Activated T-helper 1 cell treated with anti-CD3 and anti-CD28 coated beads, Interleukin-12 subunit alpha, Interleukin-12 subunit beta, Interleukin-2, Interleukin-4 antibody, amounts not matched to agents 30 ng/mL and 10 ng/mL and 1 ng/mL, durations not matched to agents 14 hours and 24 hours and 36 hours (primary cell): ENCODE measurements at regions of chr2 and their contacts with region 1.

Region 1: GRCh38 chr2:36147670-36148390 is 207.7 kb upstream of the CRIM1 start:
- DNase-seq: no peak
- H3K4me3 Mint-ChIP-seq: peak overlapping the region; percentile 19
- H3K27ac Mint-ChIP-seq: peak overlapping the region; percentile 49
- H3K4me1 Mint-ChIP-seq: peaks cover 26% of the 10 kb centered on the region
- H3K27me3 Mint-ChIP-seq: peaks cover 17% of the 10 kb centered on the region

Region 2: GRCh38 chr2:35973132-35973736 is 174.6 kb before region 1 on chr2:
- intact Hi-C with region 1: loop called (anchors 2 kb)
- DNase-seq: no peak
- H3K4me3 Mint-ChIP-seq: no peak overlapping the region
- H3K27ac Mint-ChIP-seq: no peak overlapping the region
- H3K4me1 Mint-ChIP-seq: no peaks in the 10 kb centered on the region
- H3K27me3 Mint-ChIP-seq: peaks cover 16% of the 10 kb centered on the region

Region 3: GRCh38 chr2:36277146-36277808 is 129.4 kb after region 1 on chr2:
- intact Hi-C with region 1: loop called (anchors 1 kb)
- DNase-seq: no peak
- H3K4me3 Mint-ChIP-seq: no peak overlapping the region
- H3K27ac Mint-ChIP-seq: peak overlapping the region; percentile 56
- H3K4me1 Mint-ChIP-seq: peaks cover 10% of the 10 kb centered on the region
- H3K27me3 Mint-ChIP-seq: peaks cover 2% of the 10 kb centered on the region

Region 4: GRCh38 chr2:36337354-36337753 is 189.5 kb after region 1 on chr2:
- intact Hi-C with region 1: loop called (anchors 1 kb)
- DNase-seq: no peak
- H3K4me3 Mint-ChIP-seq: no peak overlapping the region
- H3K27ac Mint-ChIP-seq: no peak overlapping the region
- H3K4me1 Mint-ChIP-seq: peaks cover 10% of the 10 kb centered on the region
- H3K27me3 Mint-ChIP-seq: peaks cover 6% of the 10 kb centered on the region

Region 5: DNA sequence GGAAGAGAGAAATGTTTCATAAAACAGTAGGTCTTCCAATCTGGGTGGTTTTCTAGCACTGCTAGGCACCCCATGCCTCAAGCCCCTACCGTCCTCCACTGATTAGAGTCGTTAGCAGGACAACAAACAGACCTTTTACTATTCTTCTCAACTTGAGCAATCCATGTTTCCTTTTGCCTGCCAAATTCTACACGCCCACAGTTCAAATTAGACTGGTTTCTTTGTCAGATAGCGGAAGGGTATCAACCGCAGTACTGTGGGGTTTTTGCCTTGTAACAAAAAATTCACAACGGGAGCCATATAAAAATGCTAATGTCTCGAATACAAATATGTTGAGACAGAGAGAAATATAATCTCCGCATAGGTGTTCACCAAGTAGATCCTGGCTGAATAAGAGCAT is 608.6 kb after region 1 on chr2:
- intact Hi-C with region 1: no loop called
- DNase-seq: no peak
- H3K4me3 Mint-ChIP-seq: no peak overlapping the region
- H3K27ac Mint-ChIP-seq: no peak overlapping the region
- H3K4me1 Mint-ChIP-seq: no peaks in the 10 kb centered on the region
- H3K27me3 Mint-ChIP-seq: peaks cover 8% of the 10 kb centered on the region

Region 6: DNA sequence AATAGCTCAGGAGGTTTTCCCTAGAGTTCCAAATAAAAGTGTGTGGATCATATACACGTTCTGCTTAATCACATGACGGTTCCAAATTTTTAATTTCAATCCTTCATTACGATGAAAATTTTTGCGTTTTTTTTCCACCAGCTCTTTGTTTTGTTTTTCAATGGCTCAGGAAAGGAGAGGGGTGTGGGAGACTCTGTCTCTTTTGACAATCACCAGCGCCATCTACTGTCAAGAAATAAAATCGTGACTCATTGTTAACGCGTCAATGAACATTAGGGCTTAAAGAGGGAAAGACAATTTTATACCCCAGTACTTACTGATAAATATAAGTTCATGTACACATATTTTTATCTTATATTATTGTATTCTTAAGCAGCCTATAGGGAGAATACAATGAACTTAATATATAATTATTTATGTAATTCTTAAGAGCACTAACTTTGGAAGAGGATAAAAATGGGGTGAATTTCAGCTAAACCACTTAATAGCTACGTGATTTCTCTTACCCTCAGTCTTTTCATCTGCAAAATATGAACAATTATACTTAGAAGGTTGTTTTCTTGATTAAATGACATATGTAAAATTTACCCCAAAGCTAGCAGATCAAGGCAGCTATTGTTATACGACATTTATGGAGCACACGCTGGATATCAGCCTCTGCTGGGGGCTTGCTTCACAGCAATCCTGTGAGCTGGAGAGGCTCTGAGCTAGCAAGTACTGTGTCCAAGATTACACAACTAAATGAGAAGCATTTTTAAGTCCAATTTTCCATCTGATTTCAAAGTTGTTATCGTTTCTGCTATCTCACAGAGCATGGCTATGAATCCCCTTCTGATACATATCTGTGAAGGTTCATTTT is 1729.9 kb after region 1 on chr2:
- intact Hi-C with region 1: loop called (anchors 10 kb)
- DNase-seq: no peak
- H3K4me3 Mint-ChIP-seq: no peak overlapping the region
- H3K27ac Mint-ChIP-seq: no peak overlapping the region
- H3K4me1 Mint-ChIP-seq: peaks cover 27% of the 10 kb centered on the region
- H3K27me3 Mint-ChIP-seq: peaks cover 27% of the 10 kb centered on the region